ENCODE measurements at regions of chr4 and their contacts with region 1.

Region 1: DNA sequence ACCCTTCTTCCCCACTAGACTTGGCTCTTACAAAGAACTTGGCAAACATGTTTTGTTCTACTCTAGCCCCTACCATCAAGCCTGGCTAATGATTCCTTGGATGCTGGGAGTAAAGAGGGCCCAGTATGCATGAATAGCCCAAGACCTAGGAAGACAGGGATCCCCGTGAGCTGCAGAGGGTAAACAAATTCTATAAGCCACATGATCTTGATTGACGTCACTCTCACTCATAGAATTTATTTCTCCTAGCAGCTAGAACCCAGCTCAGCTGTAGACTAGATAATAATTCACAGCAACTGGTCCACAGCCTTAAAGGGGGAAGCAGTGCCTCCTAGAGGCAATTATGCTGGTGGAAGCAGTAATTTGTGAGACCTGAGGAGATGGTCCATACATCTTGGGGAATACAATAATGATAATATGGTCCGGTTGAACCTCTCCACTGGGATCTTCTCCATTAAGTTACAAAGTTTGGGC is 16.1 kb upstream of the USO1 start:
- DNase-seq: no peak
- ATAC-seq: peak; percentile 96
- H3K4me3 ChIP-seq: no peak overlapping the region
- H3K27ac ChIP-seq: no peak overlapping the region
- H3K4me1 ChIP-seq: no peaks in the 10 kb centered on the region; the same call in 1 of the 2 replicates
- H3K27me3 ChIP-seq: no peaks in the 10 kb centered on the region
- CTCF ChIP-seq: peak; percentile 51 to 56 (median 56)
- EP300 ChIP-seq: no peak
- POLR2A ChIP-seq: no peak
- RAD21 ChIP-seq: peak; percentile 77

Region 2: DNA sequence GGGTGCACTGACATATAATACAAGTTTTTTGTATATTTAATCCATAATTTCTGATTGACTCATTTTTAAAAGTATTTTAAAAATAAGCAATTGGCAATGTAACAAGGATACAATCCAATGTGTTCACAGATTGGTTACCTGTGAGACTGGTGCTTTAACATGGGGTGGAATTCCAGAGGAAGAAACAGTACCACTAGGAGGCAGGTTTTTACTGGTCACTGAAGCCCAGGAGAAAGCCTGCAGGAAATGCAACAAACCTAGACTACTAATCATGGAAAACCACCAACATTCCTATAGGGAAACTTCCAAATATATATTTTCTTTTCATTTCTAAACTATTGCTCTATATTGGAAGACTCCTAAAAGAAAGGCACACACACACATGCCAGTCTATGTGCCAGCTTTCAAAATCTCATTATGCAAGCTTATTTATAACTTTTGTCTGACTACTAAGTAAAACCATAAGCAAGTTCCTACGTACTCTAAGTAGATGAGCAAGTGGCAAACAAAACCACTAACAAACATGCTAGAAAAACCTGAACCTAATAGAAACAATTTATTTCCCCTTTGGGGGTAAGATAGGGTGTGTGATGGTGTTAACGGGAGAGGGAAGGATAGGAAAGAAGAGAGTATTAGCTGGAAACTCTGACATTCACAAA is 54.3 kb before region 1 on chr4:
- CTCF ChIA-PET with region 1: interaction called, 10 read pairs
- POLR2A ChIA-PET with region 1: no interaction called
- RAD21 ChIA-PET with region 1: interaction called, 8 read pairs
- SMC1A ChIA-PET with region 1: interaction called, 7 read pairs
- in situ Hi-C with region 1: no loop called
- intact Hi-C with region 1: no loop called
- DNase-seq: no peak
- ATAC-seq: peak; percentile 37; the same call in 1 of the 3 replicates
- H3K4me3 ChIP-seq: no peak overlapping the region
- H3K27ac ChIP-seq: no peak overlapping the region
- H3K4me1 ChIP-seq: peaks cover 7% of the 10 kb centered on the region; the same call in 1 of the 2 replicates
- H3K27me3 ChIP-seq: no peaks in the 10 kb centered on the region
- CTCF ChIP-seq: peak; percentile 17 to 41 (median 24); a peak in 2 of 6 replicates
- EP300 ChIP-seq: no peak
- POLR2A ChIP-seq: no peak
- RAD21 ChIP-seq: no peak

Region 3: DNA sequence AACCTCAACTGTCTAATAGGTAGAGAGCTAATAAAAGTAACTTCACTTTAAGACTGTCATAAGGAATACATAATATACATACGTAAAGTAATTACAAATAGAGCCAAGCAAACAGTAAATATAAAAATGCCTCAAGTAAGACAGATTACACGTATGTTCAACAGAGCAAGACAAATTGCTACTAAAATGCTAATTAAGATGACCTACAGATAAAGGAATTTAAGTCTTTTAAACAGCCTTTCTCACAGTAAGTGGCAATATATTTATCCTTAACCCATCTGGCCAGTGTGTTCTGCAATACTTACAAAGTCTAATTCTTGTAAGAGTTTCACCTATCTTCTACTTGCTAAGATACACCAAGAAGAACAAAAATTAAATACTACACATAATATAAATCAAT is 47.8 kb before region 1 on chr4:
- CTCF ChIA-PET with region 1: interaction called, 12 read pairs
- POLR2A ChIA-PET with region 1: no interaction called
- RAD21 ChIA-PET with region 1: no interaction called
- SMC1A ChIA-PET with region 1: interaction called, 3 read pairs
- in situ Hi-C with region 1: no loop called
- intact Hi-C with region 1: no loop called
- DNase-seq: no peak
- ATAC-seq: no peak
- H3K4me3 ChIP-seq: no peak overlapping the region
- H3K27ac ChIP-seq: no peak overlapping the region
- H3K4me1 ChIP-seq: peaks cover 7% of the 10 kb centered on the region; the same call in 1 of the 2 replicates
- H3K27me3 ChIP-seq: no peaks in the 10 kb centered on the region
- CTCF ChIP-seq: no peak
- EP300 ChIP-seq: no peak
- POLR2A ChIP-seq: no peak
- RAD21 ChIP-seq: no peak

Region 4: GRCh38 chr4:75666299-75666698 is 42.0 kb before region 1 on chr4:
- CTCF ChIA-PET with region 1: interaction called, 28 read pairs
- POLR2A ChIA-PET with region 1: no interaction called
- RAD21 ChIA-PET with region 1: interaction called, 16 read pairs
- SMC1A ChIA-PET with region 1: interaction called, 8 read pairs
- in situ Hi-C with region 1: no loop called
- intact Hi-C with region 1: no loop called
- DNase-seq: no peak
- ATAC-seq: no peak
- H3K4me3 ChIP-seq: peak overlapping the region; percentile 15; the same call in 1 of the 2 replicates
- H3K27ac ChIP-seq: no peak overlapping the region
- H3K4me1 ChIP-seq: no peaks in the 10 kb centered on the region; the same call in 1 of the 2 replicates
- H3K27me3 ChIP-seq: no peaks in the 10 kb centered on the region
- CTCF ChIP-seq: no peak
- EP300 ChIP-seq: no peak
- POLR2A ChIP-seq: no peak
- RAD21 ChIP-seq: no peak

Region 5: GRCh38 chr4:75673027-75673958 is 35.0 kb before region 1 on chr4 and contains the start of gene G3BP2:
- CTCF ChIA-PET with region 1: interaction called, 28 read pairs
- POLR2A ChIA-PET with region 1: interaction called, 6 read pairs
- RAD21 ChIA-PET with region 1: interaction called, 16 read pairs
- SMC1A ChIA-PET with region 1: interaction called, 8 read pairs
- in situ Hi-C with region 1: no loop called
- intact Hi-C with region 1: no loop called
- DNase-seq: peak; percentile 98
- ATAC-seq: peak; percentile 93
- H3K4me3 ChIP-seq: peak within 1 kb of the TSS; percentile 77
- H3K27ac ChIP-seq: peak within 1 kb of the TSS; percentile 92
- H3K4me1 ChIP-seq: peaks cover 5% of the 10 kb centered on the region; the same call in 1 of the 2 replicates
- H3K27me3 ChIP-seq: no peaks in the 10 kb centered on the region
- CTCF ChIP-seq: no peak
- EP300 ChIP-seq: peak in 1 of 2 experiments; percentile 9; a peak in 1 of 4 replicates
- POLR2A ChIP-seq: peak; percentile 98
- RAD21 ChIP-seq: no peak
- polyA plus RNA-seq, gene G3BP2: 22.2 to 27.9 TPM

Region 6: GRCh38 chr4:75895744-75896314 is 187.6 kb after region 1 on chr4:
- CTCF ChIA-PET with region 1: no interaction called
- POLR2A ChIA-PET with region 1: no interaction called
- RAD21 ChIA-PET with region 1: no interaction called
- SMC1A ChIA-PET with region 1: no interaction called
- in situ Hi-C with region 1: no loop called
- intact Hi-C with region 1: no loop called
- DNase-seq: no peak
- ATAC-seq: peak; percentile 87
- H3K4me3 ChIP-seq: no peak overlapping the region
- H3K27ac ChIP-seq: no peak overlapping the region
- H3K4me1 ChIP-seq: no peaks in the 10 kb centered on the region
- H3K27me3 ChIP-seq: no peaks in the 10 kb centered on the region
- CTCF ChIP-seq: peak; percentile 59 to 64 (median 63)
- EP300 ChIP-seq: no peak
- POLR2A ChIP-seq: no peak
- RAD21 ChIP-seq: peak; percentile 41